ENCODE measurements at regions of chr6 and their contacts with region 1.

Region 1: DNA sequence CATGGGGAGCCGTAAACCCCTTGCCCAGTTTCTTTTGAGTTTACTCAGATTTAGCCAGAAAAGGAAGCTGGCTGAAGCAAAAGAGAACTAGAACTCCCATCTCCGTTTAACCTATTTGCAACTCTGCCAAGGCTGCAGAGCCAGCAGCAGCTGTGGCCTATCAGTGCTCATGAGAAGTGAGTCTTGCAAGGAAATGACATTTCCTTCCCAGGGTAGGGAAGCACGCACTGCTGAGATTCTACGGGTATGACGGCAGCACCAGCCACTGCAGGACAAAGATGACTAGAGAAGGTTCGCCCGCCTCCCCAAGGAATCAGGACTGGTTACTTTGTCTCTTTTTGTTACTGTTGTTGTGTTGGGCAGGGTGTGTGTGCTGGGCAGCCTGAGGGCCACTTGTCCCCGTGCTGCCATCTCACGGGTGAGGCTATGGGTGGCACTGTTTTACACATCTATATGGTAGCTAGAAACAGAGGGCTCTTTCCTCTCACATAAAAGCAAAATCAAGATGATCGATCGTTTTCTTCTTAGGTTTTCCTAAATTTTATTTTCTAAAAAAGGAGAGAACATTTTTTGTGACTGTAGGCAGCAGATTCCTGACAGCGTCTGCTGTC is 47.7 kb downstream of the PPP1R3G start:
- DNase-seq: peak; percentile 59
- ATAC-seq: peak; percentile 93
- H3K4me3 ChIP-seq: peak overlapping the region; percentile 41
- H3K27ac ChIP-seq: no peak overlapping the region
- H3K4me1 ChIP-seq: peaks cover 11% of the 10 kb centered on the region
- H3K27me3 ChIP-seq: no peaks in the 10 kb centered on the region
- CTCF ChIP-seq: peak in 2 of 3 experiments; percentile 4 to 11; a peak in 1 of 6 replicates
- EP300 ChIP-seq: no peak
- POLR2A ChIP-seq: no peak
- RAD21 ChIP-seq: no peak

Region 2: DNA sequence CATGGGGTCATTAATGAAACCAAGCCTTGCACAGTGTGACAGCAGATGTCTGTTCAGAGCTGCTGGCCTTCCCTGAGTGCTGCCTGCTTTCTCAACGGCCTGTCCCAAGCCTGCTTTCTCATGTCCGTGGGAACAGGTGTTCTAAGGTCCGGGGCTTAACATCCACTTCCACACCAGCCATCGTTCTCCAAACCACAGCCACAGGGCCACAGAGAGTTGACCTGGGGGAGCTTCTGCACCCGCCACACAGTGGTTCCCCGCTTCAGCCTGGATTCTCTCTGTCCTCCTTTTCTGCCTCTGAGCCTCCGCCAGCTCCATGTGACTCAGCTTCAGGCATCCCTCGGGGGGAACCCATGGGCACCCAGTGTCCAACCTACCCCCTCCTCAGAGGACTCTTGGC is 74.6 kb before region 1 on chr6:
- CTCF ChIA-PET with region 1: no interaction called
- POLR2A ChIA-PET with region 1: no interaction called
- RAD21 ChIA-PET with region 1: no interaction called
- SMC1A ChIA-PET with region 1: no interaction called
- in situ Hi-C with region 1: no loop called
- intact Hi-C with region 1: loop called (anchors 5 kb)
- DNase-seq: no peak
- ATAC-seq: no peak
- H3K4me3 ChIP-seq: no peak overlapping the region
- H3K27ac ChIP-seq: no peak overlapping the region
- H3K4me1 ChIP-seq: no peaks in the 10 kb centered on the region
- H3K27me3 ChIP-seq: no peaks in the 10 kb centered on the region; a peak in 1 of 4 replicates
- CTCF ChIP-seq: no peak
- EP300 ChIP-seq: no peak
- POLR2A ChIP-seq: no peak
- RAD21 ChIP-seq: no peak

Region 3: DNA sequence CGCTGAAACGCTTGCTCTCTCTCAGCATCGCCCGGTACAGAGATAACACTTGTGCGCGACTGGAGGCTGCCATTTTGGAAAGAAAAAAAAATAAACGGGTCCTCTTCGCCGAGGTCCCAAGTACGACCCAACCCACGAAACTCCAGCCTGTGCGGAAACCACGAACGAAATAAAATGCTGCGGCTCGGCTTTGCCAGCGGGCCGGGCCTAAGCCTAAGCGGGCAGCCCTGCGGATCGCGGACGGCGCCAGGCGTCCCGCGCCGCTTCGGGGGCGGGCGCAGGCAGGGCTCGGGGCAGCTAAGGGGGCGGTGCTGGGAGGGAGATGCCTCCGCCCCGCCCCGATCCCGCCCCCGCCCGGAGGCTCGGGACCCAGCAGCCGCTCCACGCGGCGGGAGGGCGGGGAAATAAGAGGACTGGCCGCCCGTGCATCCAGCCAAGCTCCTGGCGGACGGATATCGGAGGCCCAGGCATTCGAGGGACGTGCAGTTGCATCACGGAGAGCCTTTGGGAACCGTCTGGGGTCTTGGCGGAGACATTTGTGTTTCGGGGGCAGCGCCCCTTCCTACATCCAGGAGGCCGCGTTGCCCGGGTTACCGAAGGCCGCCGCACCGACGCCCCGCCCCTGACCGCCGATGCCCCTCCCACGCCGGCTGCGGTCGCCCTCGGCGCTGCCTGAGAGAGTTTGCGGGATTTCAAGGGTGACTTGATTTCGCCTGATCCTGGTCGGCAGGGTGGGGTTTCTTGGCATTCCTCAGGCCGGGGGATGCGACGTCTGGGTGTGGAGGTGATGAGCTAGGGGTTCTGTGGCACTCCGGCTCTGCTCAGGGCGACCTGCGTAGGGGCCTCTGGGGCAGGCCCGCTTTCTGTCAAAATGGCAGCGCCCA is 128.1 kb after region 1 on chr6 and contains the starts of genes FARS2 and LYRM4:
- CTCF ChIA-PET with region 1: no interaction called
- POLR2A ChIA-PET with region 1: no interaction called
- RAD21 ChIA-PET with region 1: no interaction called
- SMC1A ChIA-PET with region 1: no interaction called
- in situ Hi-C with region 1: no loop called
- intact Hi-C with region 1: no loop called
- DNase-seq: no peak
- ATAC-seq: peak; percentile 87
- H3K4me3 ChIP-seq: peak within 1 kb of the TSS; percentile 90
- H3K27ac ChIP-seq: peak within 1 kb of the TSS; percentile 98
- H3K4me1 ChIP-seq: peaks cover 8% of the 10 kb centered on the region; the same call in 1 of the 2 replicates
- H3K27me3 ChIP-seq: no peaks in the 10 kb centered on the region
- CTCF ChIP-seq: peak in 2 of 3 experiments; percentile 11 to 18; a peak in 2 of 6 replicates
- EP300 ChIP-seq: no peak
- POLR2A ChIP-seq: peak; percentile 64
- RAD21 ChIP-seq: no peak
- polyA plus RNA-seq, gene FARS2: 35.1 to 46.7 TPM
- polyA plus RNA-seq, gene LYRM4: 65.6 to 66.8 TPM

Measured in GM12878 (cell line).